Activated naive CD4-positive, alpha-beta T cell treated with anti-CD3 and anti-CD28 coated beads for 36 hours (primary cell): ENCODE measurements at regions of chr1 and their contacts with region 1.

Region 1: GRCh38 chr1:205313563-205314308 is 7.8 kb downstream of the NUAK2 start:
- DNase-seq: peak; percentile 77
- H3K4me3 Mint-ChIP-seq: peak overlapping the region; percentile 80
- H3K27ac Mint-ChIP-seq: peak overlapping the region; percentile 93
- H3K4me1 Mint-ChIP-seq: peaks cover 85% of the 10 kb centered on the region
- H3K27me3 Mint-ChIP-seq: no peaks in the 10 kb centered on the region

Region 2: DNA sequence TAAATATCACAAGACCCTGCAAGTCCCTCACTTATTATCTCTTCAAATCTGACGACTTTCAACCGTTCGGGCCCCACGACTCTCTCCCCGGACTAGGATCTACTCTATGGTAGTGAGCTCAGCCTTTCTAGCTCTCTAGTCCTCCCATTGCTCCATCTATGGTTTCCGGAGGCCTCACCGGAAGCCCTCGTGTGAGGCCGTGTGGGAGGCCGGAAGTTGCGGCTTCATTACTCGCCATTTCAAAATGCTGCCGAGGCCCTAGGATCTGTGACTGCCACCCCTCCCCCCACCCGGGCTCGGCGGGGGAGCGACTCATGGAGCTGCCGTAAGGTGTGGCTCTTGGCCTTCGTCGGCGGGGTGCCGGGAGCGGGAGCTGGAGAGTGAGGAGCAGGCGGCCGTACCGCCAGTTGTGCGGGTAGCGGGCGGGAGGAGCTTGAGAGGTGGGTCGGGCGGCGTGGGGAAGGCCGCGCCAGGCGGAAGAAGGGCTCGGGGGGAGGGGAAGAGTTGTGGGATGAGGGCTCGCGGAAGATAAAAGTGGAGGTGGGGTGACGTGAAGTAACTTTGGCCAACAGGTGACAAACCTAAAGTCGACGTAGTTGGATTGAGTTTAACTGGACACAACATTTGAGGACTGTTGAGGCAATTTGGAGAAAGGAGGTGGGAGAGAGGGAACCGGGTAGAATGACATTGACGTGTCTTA is 797.4 kb before region 1 on chr1 and contains the start of gene MDM4:
- CTCF ChIA-PET with region 1: no interaction called
- intact Hi-C with region 1: loop called (anchors 10 kb)
- DNase-seq: peak; percentile 97
- H3K4me3 Mint-ChIP-seq: no peak within 1 kb of the TSS
- H3K27ac Mint-ChIP-seq: peak within 1 kb of the TSS; percentile 72
- H3K4me1 Mint-ChIP-seq: peaks cover 59% of the 10 kb centered on the region
- H3K27me3 Mint-ChIP-seq: no peaks in the 10 kb centered on the region
- total RNA-seq, gene MDM4: 109 TPM

Region 3: GRCh38 chr1:205237526-205238484 is 75.9 kb before region 1 on chr1:
- CTCF ChIA-PET with region 1: no interaction called
- intact Hi-C with region 1: loop called (anchors 1 kb)
- DNase-seq: peak; percentile 92
- H3K4me3 Mint-ChIP-seq: peak overlapping the region; percentile 44
- H3K27ac Mint-ChIP-seq: peak overlapping the region; percentile 98
- H3K4me1 Mint-ChIP-seq: peaks cover 77% of the 10 kb centered on the region
- H3K27me3 Mint-ChIP-seq: no peaks in the 10 kb centered on the region

Region 4: DNA sequence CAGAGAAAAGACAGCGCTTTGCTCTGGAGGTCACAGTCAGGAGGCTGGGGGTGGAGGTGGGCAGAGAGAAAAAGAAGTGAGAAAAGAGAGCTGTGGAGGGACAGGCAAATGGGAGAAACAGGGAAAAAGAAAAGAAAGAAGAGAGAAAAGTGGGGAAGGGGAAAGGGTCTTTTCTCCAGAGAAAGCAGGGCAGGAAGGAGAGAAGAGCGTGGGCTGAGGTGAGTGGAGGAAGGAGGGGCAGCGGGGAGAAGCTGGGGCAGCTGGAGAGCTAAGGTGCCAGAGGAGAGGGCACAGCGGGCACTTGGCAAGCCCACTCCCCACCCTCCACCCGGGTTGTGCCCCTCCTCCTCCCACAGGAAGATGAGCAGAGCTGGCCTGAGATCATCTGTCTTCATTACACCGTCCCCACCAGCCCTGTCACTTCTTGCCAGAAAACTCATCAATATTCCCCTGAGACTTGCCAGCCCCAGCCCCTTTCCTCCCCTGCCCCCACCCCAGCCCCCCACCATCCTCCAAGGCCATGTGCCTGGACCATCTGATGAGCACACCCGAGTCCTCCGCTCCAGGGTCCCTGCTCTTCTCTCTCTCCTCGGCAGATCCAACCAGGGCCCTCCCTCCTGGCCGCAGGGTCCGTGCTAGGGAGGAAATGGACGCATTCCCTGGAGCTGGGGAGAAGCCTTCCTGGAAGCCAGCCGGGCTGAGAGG is 159.2 kb after region 1 on chr1:
- CTCF ChIA-PET with region 1: no interaction called
- intact Hi-C with region 1: no loop called
- DNase-seq: no peak
- H3K4me3 Mint-ChIP-seq: no peak overlapping the region
- H3K27ac Mint-ChIP-seq: no peak overlapping the region
- H3K4me1 Mint-ChIP-seq: no peaks in the 10 kb centered on the region
- H3K27me3 Mint-ChIP-seq: peaks cover 37% of the 10 kb centered on the region